ENCODE measurements at regions of chr1 and their contacts with region 1.

Region 1: DNA sequence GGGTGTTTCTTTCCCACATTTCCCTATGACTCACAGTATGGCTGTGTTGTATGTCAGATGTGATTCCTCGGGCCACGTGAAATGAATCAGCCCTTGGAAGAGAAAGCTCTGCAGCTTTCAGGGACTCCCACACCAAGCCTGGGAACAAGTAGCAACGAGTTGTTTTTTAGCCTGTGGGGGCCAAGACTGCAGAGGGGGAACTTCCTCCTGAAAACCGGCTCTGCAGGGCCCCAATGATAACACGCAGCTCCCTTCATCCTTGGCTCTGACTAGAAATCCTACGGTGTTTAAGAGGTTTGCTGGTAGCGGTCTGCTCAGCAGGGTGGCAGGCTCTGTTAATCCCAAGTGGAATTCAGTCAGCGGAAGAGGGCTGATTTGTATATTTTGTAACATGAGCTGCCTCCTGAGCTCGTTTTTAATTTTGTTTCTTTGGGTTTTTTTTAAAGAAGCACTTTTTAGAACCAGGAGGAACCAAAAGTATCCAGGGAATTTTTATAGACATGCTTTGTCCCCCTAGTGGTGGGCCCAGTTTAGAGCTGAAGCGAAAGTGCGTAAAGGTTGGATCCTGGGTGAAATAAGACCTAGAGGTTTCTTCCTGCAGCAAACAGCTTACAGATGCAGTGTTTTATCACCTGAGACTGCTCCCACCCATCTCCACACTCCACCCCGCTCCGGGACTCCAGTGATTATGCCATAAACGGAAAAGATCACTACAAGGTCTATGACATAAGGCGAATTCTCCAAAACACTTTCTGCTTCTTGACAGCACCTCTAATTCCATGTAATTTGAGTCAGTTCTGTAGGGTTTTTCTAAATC is 48.8 kb downstream of the LAMC2 start:
- DNase-seq: peak; percentile 59 to 70
- ATAC-seq: peak; percentile 75 to 88
- H3K4me3 ChIP-seq: peak overlapping the region; percentile 28; the same call in 2 of the 3 replicates
- H3K27ac ChIP-seq: peak overlapping the region; percentile 67 to 77
- H3K4me1 ChIP-seq: peaks cover 24% of the 10 kb centered on the region
- CTCF ChIP-seq: peak; percentile 72
- EP300 ChIP-seq: no peak
- POLR2A ChIP-seq: no peak
- RAD21 ChIP-seq: peak; percentile 50 to 60

Region 2: GRCh38 chr1:183030053-183030452 is 204.8 kb before region 1 on chr1:
- CTCF ChIA-PET with region 1: interaction called, 10 read pairs
- POLR2A ChIA-PET with region 1: no interaction called
- DNase-seq: peak in 1 of 2 experiments; percentile 29
- ATAC-seq: peak; percentile 37 to 49; a peak in 3 of 6 replicates
- H3K4me3 ChIP-seq: no peak overlapping the region
- H3K27ac ChIP-seq: peak overlapping the region in 1 of 2 experiments; percentile 61; a peak in 4 of 6 replicates
- H3K4me1 ChIP-seq: peaks cover 83% of the 10 kb centered on the region
- CTCF ChIP-seq: no peak
- EP300 ChIP-seq: no peak
- POLR2A ChIP-seq: no peak
- RAD21 ChIP-seq: no peak

Region 3: GRCh38 chr1:183209533-183210158 is 25.2 kb before region 1 on chr1:
- CTCF ChIA-PET with region 1: interaction called, 10 read pairs
- POLR2A ChIA-PET with region 1: no interaction called
- DNase-seq: peak; percentile 65 to 69
- ATAC-seq: peak; percentile 87 to 89
- H3K4me3 ChIP-seq: no peak overlapping the region
- H3K27ac ChIP-seq: peak overlapping the region in 1 of 2 experiments; percentile 68; a peak in 2 of 6 replicates
- H3K4me1 ChIP-seq: peaks cover 17% of the 10 kb centered on the region
- CTCF ChIP-seq: no peak
- EP300 ChIP-seq: no peak
- POLR2A ChIP-seq: no peak
- RAD21 ChIP-seq: no peak

Region 4: DNA sequence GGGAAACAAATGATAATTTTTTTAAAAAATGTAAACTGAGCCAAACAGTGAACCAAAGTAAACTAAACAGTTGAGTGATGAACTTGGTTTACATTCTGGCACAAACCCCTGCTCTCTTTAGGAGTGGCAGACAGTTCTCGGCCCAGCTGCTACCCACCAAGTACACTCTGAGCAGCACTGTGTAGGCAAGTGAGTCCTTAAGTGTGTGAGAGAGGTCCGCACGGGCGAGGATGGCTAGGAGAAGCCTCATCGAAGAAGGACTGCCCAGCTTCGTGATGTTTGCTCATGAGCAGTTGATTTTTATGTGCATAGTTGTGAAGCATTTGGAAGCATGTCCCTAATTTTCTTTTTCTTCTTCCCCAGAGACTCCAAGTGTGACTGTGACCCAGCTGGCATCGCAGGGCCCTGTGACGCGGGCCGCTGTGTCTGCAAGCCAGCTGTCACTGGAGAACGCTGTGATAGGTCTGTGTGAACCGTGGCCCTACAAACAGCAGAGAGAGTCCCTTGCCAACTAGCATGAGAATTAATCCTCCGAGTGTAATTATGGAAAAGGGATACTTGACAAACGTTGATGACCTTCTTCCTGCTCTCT is 16.7 kb before region 1 on chr1:
- CTCF ChIA-PET with region 1: interaction called, 20 read pairs
- POLR2A ChIA-PET with region 1: no interaction called
- DNase-seq: no peak
- ATAC-seq: no peak
- H3K4me3 ChIP-seq: no peak overlapping the region
- H3K27ac ChIP-seq: no peak overlapping the region
- H3K4me1 ChIP-seq: peaks cover 5% of the 10 kb centered on the region; the same call in 2 of the 3 replicates
- CTCF ChIP-seq: no peak
- EP300 ChIP-seq: no peak
- POLR2A ChIP-seq: no peak
- RAD21 ChIP-seq: no peak

Measured in A549 (cell line).